Right ventricle myocardium superior (tissue), 1 donor: ENCODE measurements at regions of chr12 and their contacts with region 1.

Region 1: DNA sequence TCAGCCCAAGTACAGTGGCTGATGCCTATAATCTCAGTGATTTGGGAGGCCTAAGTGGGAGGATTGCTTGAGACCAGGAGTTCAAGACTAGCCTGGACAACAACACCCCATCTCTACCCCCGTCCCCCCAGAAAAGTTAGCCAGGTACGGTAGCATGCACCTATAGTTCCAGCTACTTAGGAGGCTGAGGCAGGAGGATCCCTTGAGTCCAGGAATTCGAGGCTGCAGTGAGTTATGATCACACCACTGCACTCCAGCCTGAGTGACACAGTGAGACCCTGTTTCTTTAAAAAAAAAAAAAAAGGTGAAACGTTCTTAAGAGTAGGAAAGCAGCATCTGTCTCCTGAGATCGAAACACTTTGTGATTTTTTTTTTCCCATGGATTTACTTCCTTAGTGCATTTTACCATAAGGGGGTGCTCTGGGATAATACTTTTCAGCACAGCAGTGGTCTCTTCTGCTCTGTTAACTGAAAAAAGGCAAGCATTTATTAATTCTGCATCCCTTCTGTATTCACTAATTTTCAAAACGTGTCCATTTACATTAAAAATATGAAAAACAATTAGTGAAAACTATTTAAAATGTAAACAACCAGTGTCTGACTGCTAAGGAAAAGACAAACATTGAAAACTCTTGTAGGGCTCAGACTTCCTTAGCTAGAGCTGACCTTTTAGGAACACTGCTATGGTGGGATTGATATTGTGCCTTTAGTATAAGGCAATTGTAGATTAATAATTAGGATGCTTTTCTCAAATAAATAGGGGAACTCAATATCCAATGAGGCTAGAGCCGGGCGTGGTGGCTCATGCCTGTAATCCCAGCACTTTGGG is 31.2 kb upstream of the USP44 start:
- DNase-seq: no peak
- ATAC-seq: peak; percentile 81

Region 2: GRCh38 chr12:95649375-95649791 is 66.9 kb after region 1 on chr12:
- intact Hi-C with region 1: no loop called
- DNase-seq: no peak
- ATAC-seq: peak; percentile 36

Region 3: DNA sequence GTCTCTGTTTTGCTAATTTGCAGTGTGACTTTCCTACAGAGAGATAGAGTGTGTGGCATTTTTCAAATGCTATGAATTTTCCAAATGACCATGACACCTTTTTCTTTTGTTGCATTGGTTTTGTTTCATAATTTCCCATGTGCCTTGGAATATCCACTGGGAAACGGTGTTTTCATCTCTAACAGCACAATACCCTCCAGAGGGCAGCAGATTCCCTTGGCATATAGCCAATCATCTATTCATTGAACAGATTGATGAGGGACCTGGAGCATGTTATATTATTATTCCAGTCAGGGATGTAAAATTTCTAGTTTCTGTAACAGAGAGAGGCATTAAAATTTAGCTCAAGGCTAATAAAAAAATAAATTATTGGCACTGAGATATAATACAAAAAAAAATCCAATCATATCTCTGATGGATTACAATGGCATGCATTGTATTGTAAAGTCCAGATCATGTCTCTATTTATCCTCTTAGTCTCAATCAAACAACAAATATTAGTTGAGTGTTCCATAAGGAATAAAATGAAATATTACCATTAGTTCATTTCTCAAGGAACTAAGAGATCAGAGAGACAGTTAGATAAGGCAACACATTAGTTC is 237.8 kb after region 1 on chr12:
- intact Hi-C with region 1: loop called (anchors 2 kb)
- DNase-seq: no peak
- ATAC-seq: no peak

Region 4: GRCh38 chr12:95848575-95849388 is 266.3 kb after region 1 on chr12:
- intact Hi-C with region 1: no loop called
- DNase-seq: no peak
- ATAC-seq: peak; percentile 34